ENCODE measurements at regions of chr9 and their contacts with region 1.

Region 1: DNA sequence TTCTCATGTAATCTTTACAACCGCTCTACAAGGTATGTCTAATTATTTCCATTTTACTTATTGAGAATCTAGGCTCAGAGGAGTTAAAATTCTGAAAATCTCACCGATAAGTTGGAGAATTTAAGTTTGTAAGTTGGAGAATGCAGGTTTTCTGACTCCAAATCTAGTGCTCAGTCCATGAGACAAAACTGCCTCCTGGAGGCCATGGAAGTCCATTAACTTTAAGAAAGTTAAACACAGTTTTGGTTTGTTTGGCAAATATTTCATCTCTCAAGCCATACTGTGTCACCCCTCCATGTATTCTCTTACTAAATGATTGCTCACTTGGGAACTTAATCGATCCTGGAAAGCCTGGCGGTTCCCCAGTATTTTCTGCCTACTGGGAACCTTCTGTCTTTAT is 52.6 kb downstream of the INIP start:
- DNase-seq: no peak
- H3K4me3 ChIP-seq: no peak overlapping the region
- H3K4me3 Mint-ChIP-seq: no peak overlapping the region
- H3K27ac Mint-ChIP-seq: no peak overlapping the region
- H3K4me1 ChIP-seq: no peaks in the 10 kb centered on the region
- H3K4me1 Mint-ChIP-seq: no peaks in the 10 kb centered on the region
- H3K27me3 ChIP-seq: no peaks in the 10 kb centered on the region
- H3K27me3 Mint-ChIP-seq: no peaks in the 10 kb centered on the region
- CTCF ChIP-seq: peak; percentile 24 to 27

Region 2: GRCh38 chr9:112086627-112087026 is 578.7 kb before region 1 on chr9:
- CTCF ChIA-PET with region 1: no interaction called
- POLR2A ChIA-PET with region 1: no interaction called
- intact Hi-C with region 1: loop called (anchors 5 kb)
- DNase-seq: no peak
- H3K4me3 ChIP-seq: no peak overlapping the region
- H3K4me3 Mint-ChIP-seq: no peak overlapping the region
- H3K27ac Mint-ChIP-seq: no peak overlapping the region
- H3K4me1 ChIP-seq: 0 out of 2 replicates have a peak, but pooled peaks cover 4% of the 10 kb centered on the region
- H3K4me1 Mint-ChIP-seq: peaks cover 12% of the 10 kb centered on the region
- H3K27me3 ChIP-seq: no peaks in the 10 kb centered on the region
- H3K27me3 Mint-ChIP-seq: no peaks in the 10 kb centered on the region
- CTCF ChIP-seq: peak; percentile 38 to 46

Region 3: GRCh38 chr9:112443200-112443599 is 222.1 kb before region 1 on chr9:
- CTCF ChIA-PET with region 1: no interaction called
- POLR2A ChIA-PET with region 1: no interaction called
- intact Hi-C with region 1: loop called (anchors 2 kb)
- DNase-seq: no peak
- H3K4me3 ChIP-seq: no peak overlapping the region
- H3K4me3 Mint-ChIP-seq: no peak overlapping the region
- H3K27ac Mint-ChIP-seq: no peak overlapping the region
- H3K4me1 ChIP-seq: no peaks in the 10 kb centered on the region
- H3K4me1 Mint-ChIP-seq: peaks cover 17% of the 10 kb centered on the region
- H3K27me3 ChIP-seq: no peaks in the 10 kb centered on the region
- H3K27me3 Mint-ChIP-seq: no peaks in the 10 kb centered on the region
- CTCF ChIP-seq: peak; percentile 41 to 51

Region 4: DNA sequence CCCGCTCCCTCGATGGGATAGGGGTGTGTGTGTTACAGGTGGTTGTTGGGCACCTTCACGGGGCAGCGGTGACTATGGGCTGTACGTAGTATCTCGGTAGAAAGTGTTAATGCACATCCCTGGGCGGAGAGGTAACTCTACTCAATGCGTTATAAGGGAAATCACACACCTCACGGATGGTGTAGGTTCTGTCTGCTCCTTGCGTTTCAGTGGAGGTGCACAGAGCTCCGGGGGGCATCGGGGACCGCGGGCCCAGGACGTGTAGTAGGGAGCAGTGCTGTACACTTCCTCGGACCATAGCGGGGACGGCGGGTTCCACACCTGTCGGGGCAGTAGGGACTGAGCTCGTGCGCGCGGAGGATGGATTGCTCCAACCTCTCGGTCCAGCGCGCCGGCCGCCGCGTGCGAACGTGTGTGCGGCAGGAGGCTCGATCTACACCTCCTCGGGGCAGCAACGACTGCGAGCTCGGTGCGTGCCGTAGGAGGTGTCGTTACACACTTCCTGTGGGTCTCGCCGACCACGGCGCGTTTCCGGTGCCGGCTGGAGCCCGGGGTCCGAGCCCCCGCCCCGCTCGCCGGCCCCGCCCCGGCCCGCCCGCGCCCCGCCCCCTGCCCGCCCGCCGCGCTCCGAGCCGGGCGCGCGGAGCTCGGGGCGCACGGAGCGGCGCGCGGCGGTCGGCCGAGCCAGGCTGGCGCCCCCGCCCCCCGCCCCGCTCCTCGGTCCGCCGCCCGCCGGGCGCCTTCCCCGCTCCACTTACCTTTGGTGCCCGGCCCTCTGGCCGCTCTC is 178.9 kb before region 1 on chr9 and contains the start of gene KIAA1958:
- CTCF ChIA-PET with region 1: no interaction called
- POLR2A ChIA-PET with region 1: no interaction called
- intact Hi-C with region 1: loop called (anchors 5 kb)
- DNase-seq: peak; percentile 88 to 93
- H3K4me3 ChIP-seq: peak within 1 kb of the TSS; percentile 66
- H3K4me3 Mint-ChIP-seq: peak within 1 kb of the TSS; percentile 99
- H3K27ac Mint-ChIP-seq: peak within 1 kb of the TSS; percentile 98
- H3K4me1 ChIP-seq: peaks cover 25% of the 10 kb centered on the region
- H3K4me1 Mint-ChIP-seq: peaks cover 33% of the 10 kb centered on the region
- H3K27me3 ChIP-seq: no peaks in the 10 kb centered on the region
- H3K27me3 Mint-ChIP-seq: no peaks in the 10 kb centered on the region
- CTCF ChIP-seq: no peak
- total RNA-seq, gene KIAA1958: 20.0 and 22.7 TPM in 2 replicates

Region 5: DNA sequence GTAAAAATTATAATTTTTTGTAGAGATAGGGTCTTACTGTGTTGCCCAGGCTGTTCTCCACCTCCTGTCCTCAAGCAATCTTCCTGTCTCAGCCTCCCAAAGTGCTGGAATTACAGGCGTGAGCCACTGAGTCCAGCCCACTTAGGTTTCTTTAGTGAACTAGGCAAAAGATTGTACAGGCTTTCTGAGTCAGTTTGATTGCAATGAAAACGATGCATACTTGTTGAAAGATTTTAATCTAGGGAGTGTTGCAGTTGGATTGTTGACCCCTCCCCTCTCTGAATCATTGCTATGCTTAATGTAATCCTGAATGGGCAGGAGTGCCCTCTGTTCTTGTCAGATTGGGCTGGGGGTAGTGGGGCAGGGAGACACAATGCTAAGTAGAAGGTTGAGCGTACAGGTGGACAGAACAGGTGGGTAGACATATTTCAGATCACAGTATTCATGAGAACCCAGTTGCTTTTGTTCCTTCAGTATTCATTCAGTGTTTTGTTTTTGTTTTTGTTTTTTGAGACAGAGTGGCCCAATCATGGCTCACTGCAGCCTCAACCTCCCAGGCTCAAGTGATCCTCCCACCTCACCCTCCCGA is 108.8 kb before region 1 on chr9:
- CTCF ChIA-PET with region 1: no interaction called
- POLR2A ChIA-PET with region 1: no interaction called
- intact Hi-C with region 1: no loop called
- DNase-seq: no peak
- H3K4me3 ChIP-seq: no peak overlapping the region
- H3K4me3 Mint-ChIP-seq: no peak overlapping the region
- H3K27ac Mint-ChIP-seq: no peak overlapping the region
- H3K4me1 ChIP-seq: peaks cover 6% of the 10 kb centered on the region
- H3K4me1 Mint-ChIP-seq: peaks cover 9% of the 10 kb centered on the region
- H3K27me3 ChIP-seq: no peaks in the 10 kb centered on the region
- H3K27me3 Mint-ChIP-seq: no peaks in the 10 kb centered on the region
- CTCF ChIP-seq: no peak

Measured in Caco-2 (cell line).